ENCODE measurements at regions of chr11 and their contacts with region 1.

Region 1: GRCh38 chr11:63888170-63889086 is 28.5 kb downstream of the RCOR2 start:
- DNase-seq: peak; percentile 40 to 77 (median 75)
- H3K4me3 ChIP-seq: peak overlapping the region in 6 of 7 experiments; percentile 32 to 79 (median 55)
- H3K27ac ChIP-seq: peak overlapping the region; percentile 50 to 79
- H3K4me1 ChIP-seq: peaks cover 7 to 66% (median 47%) of the 10 kb centered on the region in 4 experiments
- H3K27me3 ChIP-seq: no peaks in the 10 kb centered on the region

Region 2: DNA sequence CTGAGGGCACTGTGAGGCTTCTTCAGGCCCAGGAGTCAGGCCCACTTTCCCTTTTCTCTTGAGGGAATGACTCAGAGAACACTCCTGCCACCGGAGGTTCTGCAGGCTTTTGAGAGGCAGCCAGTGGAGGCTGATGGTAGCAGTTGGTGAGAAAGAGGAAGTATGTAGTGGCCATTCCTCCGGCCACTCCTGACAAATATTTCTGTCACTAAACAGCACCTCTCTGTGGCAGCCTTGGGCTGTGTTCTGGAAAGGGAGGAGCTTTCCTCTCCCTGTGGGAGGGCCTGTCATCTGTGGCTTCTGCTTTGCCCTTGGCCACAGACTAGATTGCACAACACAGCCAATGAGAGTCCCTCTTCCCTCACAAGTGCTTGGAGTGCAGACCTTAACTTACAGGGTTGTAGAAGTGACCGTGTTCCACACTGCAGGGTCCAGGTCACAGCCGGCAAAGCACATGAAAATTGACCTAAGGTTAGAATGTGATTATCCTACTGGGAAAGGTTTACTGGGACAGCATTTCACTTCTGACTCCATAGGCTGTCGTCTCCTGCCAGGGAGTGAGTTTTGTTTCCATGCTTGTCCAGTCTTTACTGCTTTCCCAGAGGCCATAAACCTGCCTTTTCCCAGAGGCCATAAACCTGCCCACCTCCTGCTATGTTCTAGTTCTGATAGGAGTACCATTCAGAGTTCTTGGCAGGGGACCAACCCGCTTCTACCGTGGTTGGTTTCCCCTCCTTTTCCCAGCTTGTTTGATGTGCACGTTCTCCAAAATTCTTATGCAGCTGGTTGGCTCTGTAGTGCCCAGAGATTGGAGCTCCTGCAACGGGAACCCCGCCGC is 16.2 kb before region 1 on chr11:
- CTCF ChIA-PET with region 1: interaction called, 19 read pairs
- POLR2A ChIA-PET with region 1: no interaction called
- DNase-seq: peak; percentile 84 to 96 (median 96)
- H3K4me3 ChIP-seq: peak overlapping the region in 3 of 7 experiments; percentile 3 to 59 (median 48)
- H3K27ac ChIP-seq: no peak overlapping the region
- H3K4me1 ChIP-seq: peaks cover 17 to 83% (median 76%) of the 10 kb centered on the region in 4 experiments
- H3K27me3 ChIP-seq: no peaks in the 10 kb centered on the region

Region 3: GRCh38 chr11:63933459-63933858 is 45.0 kb after region 1 on chr11:
- CTCF ChIA-PET with region 1: no interaction called
- POLR2A ChIA-PET with region 1: no interaction called
- DNase-seq: no peak
- H3K4me3 ChIP-seq: no peak overlapping the region
- H3K27ac ChIP-seq: no peak overlapping the region
- H3K4me1 ChIP-seq: peaks cover 2 to 11% (median 8%) of the 10 kb centered on the region in 4 experiments
- H3K27me3 ChIP-seq: peaks cover 0 to 2% (median 0%) of the 10 kb centered on the region in 5 experiments